ENCODE measurements at regions of chr2 and their contacts with region 1.

Region 1: DNA sequence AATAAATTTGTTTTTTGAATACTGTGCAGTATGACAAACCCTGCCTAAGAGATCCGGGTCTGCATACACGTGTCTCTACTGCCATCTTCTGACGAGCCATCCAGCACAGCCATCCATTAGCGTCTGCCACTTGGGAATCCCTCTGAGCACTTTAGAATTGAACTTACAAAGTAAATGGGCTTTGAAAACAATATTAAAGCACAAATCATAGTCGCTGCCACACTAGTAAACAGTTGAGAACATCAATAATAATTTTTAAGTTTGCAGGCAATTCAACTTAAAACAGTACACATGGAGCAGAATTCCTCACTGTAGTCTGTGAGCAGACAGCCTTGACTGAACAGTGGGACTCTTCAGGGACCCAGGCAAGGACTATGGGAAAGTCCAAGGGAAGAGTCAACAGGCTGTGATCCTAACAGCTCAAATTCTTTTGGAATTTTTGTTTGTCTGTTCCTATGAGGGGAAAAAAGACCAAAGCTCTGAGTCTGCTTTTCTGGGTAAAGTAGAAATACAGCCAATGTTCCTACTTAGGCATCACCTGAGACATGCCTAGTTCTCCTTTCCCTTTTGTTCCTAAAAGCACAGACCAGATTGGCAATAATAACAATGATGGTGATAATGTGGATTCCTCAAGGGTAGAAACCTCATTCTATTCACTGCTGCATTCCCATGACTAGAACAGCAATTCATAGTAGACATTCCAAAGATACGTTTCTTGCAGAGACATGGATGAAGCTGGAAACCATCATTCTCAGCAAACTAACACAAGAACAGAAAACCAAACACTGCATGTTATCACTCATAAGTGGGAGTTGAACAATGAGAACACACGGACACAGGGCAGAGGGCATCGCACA is 92.9 kb downstream of the MREG start:
- DNase-seq: peak; percentile 81
- ATAC-seq: peak; percentile 98
- H3K4me3 ChIP-seq: no peak overlapping the region
- H3K27ac ChIP-seq: peak overlapping the region; percentile 16
- H3K4me1 ChIP-seq: peaks cover 42% of the 10 kb centered on the region
- H3K27me3 ChIP-seq: no peaks in the 10 kb centered on the region
- CTCF ChIP-seq: peak; percentile 96
- EP300 ChIP-seq: peak in 1 of 2 experiments; percentile 43; a peak in 2 of 4 replicates
- POLR2A ChIP-seq: no peak
- RAD21 ChIP-seq: peak; percentile 96

Region 2: GRCh38 chr2:215396595-215397313 is 523.7 kb before region 1 on chr2:
- CTCF ChIA-PET with region 1: no interaction called
- POLR2A ChIA-PET with region 1: no interaction called
- in situ Hi-C with region 1: no loop called
- intact Hi-C with region 1: loop called (anchors 1 kb)
- DNase-seq: no peak
- ATAC-seq: peak; percentile 6; the same call in 2 of the 3 replicates
- H3K4me3 ChIP-seq: no peak overlapping the region
- H3K27ac ChIP-seq: no peak overlapping the region
- H3K4me1 ChIP-seq: peaks cover 27% of the 10 kb centered on the region
- H3K27me3 ChIP-seq: no peaks in the 10 kb centered on the region
- CTCF ChIP-seq: no peak
- EP300 ChIP-seq: no peak
- POLR2A ChIP-seq: peak; percentile 40 to 46; a peak in 2 of 4 replicates
- RAD21 ChIP-seq: no peak

Region 3: GRCh38 chr2:215430528-215431187 is 489.8 kb before region 1 on chr2:
- CTCF ChIA-PET with region 1: no interaction called
- POLR2A ChIA-PET with region 1: no interaction called
- in situ Hi-C with region 1: loop called (anchors 5 kb)
- intact Hi-C with region 1: loop called (anchors 2 kb)
- DNase-seq: no peak
- ATAC-seq: peak; percentile 3; the same call in 1 of the 3 replicates
- H3K4me3 ChIP-seq: peak overlapping the region; percentile 1 to 99 (median 64); a peak in 3 of 6 replicates
- H3K27ac ChIP-seq: peak overlapping the region; percentile 33
- H3K4me1 ChIP-seq: peaks cover 78% of the 10 kb centered on the region
- H3K27me3 ChIP-seq: no peaks in the 10 kb centered on the region; a peak in 1 of 5 replicates
- CTCF ChIP-seq: no peak
- EP300 ChIP-seq: no peak
- POLR2A ChIP-seq: peak in 1 of 2 experiments; percentile 9; a peak in 1 of 4 replicates
- RAD21 ChIP-seq: no peak

Region 4: GRCh38 chr2:215505044-215505786 is 415.3 kb before region 1 on chr2:
- CTCF ChIA-PET with region 1: no interaction called
- POLR2A ChIA-PET with region 1: no interaction called
- in situ Hi-C with region 1: no loop called
- intact Hi-C with region 1: loop called (anchors 1 kb)
- DNase-seq: peak; percentile 90
- ATAC-seq: peak; percentile 91
- H3K4me3 ChIP-seq: no peak overlapping the region
- H3K27ac ChIP-seq: peak overlapping the region; percentile 67
- H3K4me1 ChIP-seq: peaks cover 46% of the 10 kb centered on the region
- H3K27me3 ChIP-seq: no peaks in the 10 kb centered on the region
- CTCF ChIP-seq: no peak
- EP300 ChIP-seq: peak; percentile 47 to 92; a peak in 3 of 4 replicates
- POLR2A ChIP-seq: no peak
- RAD21 ChIP-seq: no peak

Region 5: DNA sequence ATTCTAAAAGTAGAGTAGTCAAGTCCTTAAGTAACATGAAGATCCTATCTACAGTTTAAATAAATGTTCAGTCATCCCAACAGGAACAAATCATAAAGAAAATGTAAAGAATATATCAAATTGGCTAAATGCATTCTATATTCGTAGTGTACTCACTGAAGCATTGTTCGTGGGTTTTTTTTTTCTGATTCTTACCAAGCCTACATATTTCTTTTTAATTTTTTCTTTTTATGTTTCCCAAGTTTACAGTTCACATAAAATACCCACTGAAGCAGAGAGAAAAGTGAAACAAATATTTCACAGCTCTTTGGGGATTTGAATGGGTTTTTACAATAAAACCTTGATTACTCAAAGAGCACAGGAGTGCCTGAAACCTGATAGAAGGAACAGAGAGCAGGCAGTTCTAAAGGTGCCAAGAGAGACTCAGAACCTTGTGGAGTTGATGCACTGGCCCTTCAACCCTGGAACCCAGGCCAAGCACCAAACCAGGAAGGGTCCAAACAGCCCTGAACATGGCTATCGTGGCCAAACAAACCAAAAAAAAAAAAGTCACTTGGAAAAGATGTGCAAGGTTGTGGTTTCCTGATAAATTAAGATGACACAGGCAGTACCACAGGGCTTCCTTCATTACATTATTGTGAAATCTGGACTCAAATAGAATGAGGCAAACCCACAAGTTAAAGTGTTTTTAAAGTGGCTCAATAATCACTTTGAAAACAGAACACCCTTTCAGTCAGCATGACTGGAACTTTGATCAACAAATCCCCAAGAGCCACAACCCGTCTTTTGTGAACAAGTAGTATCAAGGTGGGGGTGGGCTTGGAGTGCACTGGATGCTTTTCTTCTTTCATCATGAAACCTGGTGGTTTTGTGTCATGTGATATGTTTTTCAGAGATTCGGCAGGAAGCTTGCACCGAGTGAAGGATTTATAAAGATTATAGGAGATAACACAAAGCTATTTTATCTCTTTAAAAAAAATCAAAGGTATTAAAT is 239.6 kb before region 1 on chr2:
- CTCF ChIA-PET with region 1: no interaction called
- POLR2A ChIA-PET with region 1: no interaction called
- in situ Hi-C with region 1: no loop called
- intact Hi-C with region 1: loop called (anchors 1 kb)
- DNase-seq: peak; percentile 100
- ATAC-seq: peak; percentile 97
- H3K4me3 ChIP-seq: 0 out of 6 replicates have a peak overlapping the region, but pooled peaks of 1 of the 3 experiments have one; percentile 11
- H3K27ac ChIP-seq: peak overlapping the region; percentile 89
- H3K4me1 ChIP-seq: peaks cover 87% of the 10 kb centered on the region
- H3K27me3 ChIP-seq: no peaks in the 10 kb centered on the region
- CTCF ChIP-seq: no peak
- EP300 ChIP-seq: peak; percentile 98 to 100
- POLR2A ChIP-seq: no peak
- RAD21 ChIP-seq: no peak; the same call in none of the 2 replicates

Region 6: DNA sequence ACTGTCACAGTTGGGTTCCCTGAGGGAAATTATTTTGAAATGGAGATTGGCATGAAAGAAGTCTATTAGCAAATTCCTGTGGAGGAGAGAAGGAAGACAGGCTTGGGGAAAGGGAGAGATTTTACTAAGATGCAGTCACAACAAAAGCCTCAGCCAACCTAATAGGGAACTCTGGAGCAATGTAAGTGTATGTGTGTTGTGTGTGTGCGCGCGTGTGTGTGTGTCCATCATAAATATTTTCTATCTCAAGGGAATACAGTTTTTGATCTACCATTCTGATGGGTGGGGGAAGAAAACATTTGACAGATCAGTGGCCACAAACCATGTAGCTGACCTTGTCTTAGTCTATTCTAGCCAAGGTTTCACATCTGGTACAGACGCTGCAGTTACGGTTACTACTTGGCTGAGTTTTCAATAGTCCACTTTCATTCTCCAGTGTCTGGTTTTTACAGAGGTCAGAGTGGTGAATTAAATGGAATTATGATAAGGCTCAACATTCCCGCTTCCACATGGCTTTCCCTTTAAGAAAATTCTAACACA is 20.2 kb after region 1 on chr2:
- CTCF ChIA-PET with region 1: no interaction called
- POLR2A ChIA-PET with region 1: no interaction called
- in situ Hi-C with region 1: no loop called
- intact Hi-C with region 1: no loop called
- DNase-seq: no peak
- ATAC-seq: no peak
- H3K4me3 ChIP-seq: no peak overlapping the region
- H3K27ac ChIP-seq: no peak overlapping the region
- H3K4me1 ChIP-seq: no peaks in the 10 kb centered on the region
- H3K27me3 ChIP-seq: no peaks in the 10 kb centered on the region
- CTCF ChIP-seq: no peak
- EP300 ChIP-seq: no peak
- POLR2A ChIP-seq: no peak
- RAD21 ChIP-seq: no peak

Region 7: GRCh38 chr2:216034065-216034464 is 113.6 kb after region 1 on chr2:
- CTCF ChIA-PET with region 1: no interaction called
- POLR2A ChIA-PET with region 1: no interaction called
- in situ Hi-C with region 1: no loop called
- intact Hi-C with region 1: no loop called
- DNase-seq: peak; percentile 67
- ATAC-seq: peak; percentile 82
- H3K4me3 ChIP-seq: no peak overlapping the region
- H3K27ac ChIP-seq: no peak overlapping the region
- H3K4me1 ChIP-seq: no peaks in the 10 kb centered on the region
- H3K27me3 ChIP-seq: no peaks in the 10 kb centered on the region
- CTCF ChIP-seq: peak; percentile 86
- EP300 ChIP-seq: no peak
- POLR2A ChIP-seq: no peak
- RAD21 ChIP-seq: peak; percentile 41; the same call in 1 of the 2 replicates